Activated CD4-positive, alpha-beta memory T cell treated with anti-CD3 and anti-CD28 coated beads for 36 hours (primary cell): ENCODE measurements at regions of chr3 and their contacts with region 1.

Region 1: GRCh38 chr3:56801662-56802377 is at the start of gene ARHGEF3:
- DNase-seq: peak; percentile 92
- H3K4me3 Mint-ChIP-seq: peak within 1 kb of the TSS; percentile 84
- H3K27ac Mint-ChIP-seq: peak within 1 kb of the TSS; percentile 76
- H3K4me1 Mint-ChIP-seq: peaks cover 42% of the 10 kb centered on the region
- H3K27me3 Mint-ChIP-seq: no peaks in the 10 kb centered on the region
- total RNA-seq, gene ARHGEF3: 28.0 to 31.5 TPM

Region 2: GRCh38 chr3:56693750-56694149 is 108.1 kb before region 1 on chr3:
- CTCF ChIA-PET with region 1: interaction called, 21 read pairs
- POLR2A ChIA-PET with region 1: interaction called, 12 read pairs
- intact Hi-C with region 1: no loop called
- DNase-seq: no peak
- H3K4me3 Mint-ChIP-seq: no peak overlapping the region
- H3K27ac Mint-ChIP-seq: no peak overlapping the region
- H3K4me1 Mint-ChIP-seq: peaks cover 42% of the 10 kb centered on the region
- H3K27me3 Mint-ChIP-seq: no peaks in the 10 kb centered on the region

Region 3: GRCh38 chr3:56753206-56753820 is 48.5 kb before region 1 on chr3:
- CTCF ChIA-PET with region 1: interaction called, 82 read pairs
- POLR2A ChIA-PET with region 1: interaction called, 5 read pairs
- intact Hi-C with region 1: loop called (anchors 1 kb)
- DNase-seq: peak; percentile 73
- H3K4me3 Mint-ChIP-seq: peak overlapping the region; percentile 18
- H3K27ac Mint-ChIP-seq: peak overlapping the region; percentile 23
- H3K4me1 Mint-ChIP-seq: peaks cover 57% of the 10 kb centered on the region
- H3K27me3 Mint-ChIP-seq: no peaks in the 10 kb centered on the region

Region 4: GRCh38 chr3:56783644-56784447 is 18.0 kb before region 1 on chr3:
- CTCF ChIA-PET with region 1: interaction called, 263 read pairs
- POLR2A ChIA-PET with region 1: interaction called, 47 read pairs
- intact Hi-C with region 1: loop called (anchors 1 kb)
- DNase-seq: peak; percentile 84
- H3K4me3 Mint-ChIP-seq: peak overlapping the region; percentile 69
- H3K27ac Mint-ChIP-seq: peak overlapping the region; percentile 95
- H3K4me1 Mint-ChIP-seq: peaks cover 97% of the 10 kb centered on the region
- H3K27me3 Mint-ChIP-seq: no peaks in the 10 kb centered on the region

Region 5: GRCh38 chr3:56862352-56863074 is 60.7 kb after region 1 on chr3:
- CTCF ChIA-PET with region 1: interaction called, 46 read pairs
- POLR2A ChIA-PET with region 1: interaction called, 18 read pairs
- intact Hi-C with region 1: loop called (anchors 1 kb)
- DNase-seq: peak; percentile 39
- H3K4me3 Mint-ChIP-seq: peak overlapping the region; percentile 32
- H3K27ac Mint-ChIP-seq: peak overlapping the region; percentile 81
- H3K4me1 Mint-ChIP-seq: peaks cover 73% of the 10 kb centered on the region
- H3K27me3 Mint-ChIP-seq: no peaks in the 10 kb centered on the region

Region 6: GRCh38 chr3:56997675-56998074 is 195.9 kb after region 1 on chr3:
- CTCF ChIA-PET with region 1: interaction called, 18 read pairs
- POLR2A ChIA-PET with region 1: no interaction called
- intact Hi-C with region 1: no loop called
- DNase-seq: no peak
- H3K4me3 Mint-ChIP-seq: no peak overlapping the region
- H3K27ac Mint-ChIP-seq: no peak overlapping the region
- H3K4me1 Mint-ChIP-seq: peaks cover 3% of the 10 kb centered on the region
- H3K27me3 Mint-ChIP-seq: no peaks in the 10 kb centered on the region